ENCODE measurements at regions of chr2 and their contacts with region 1.

Region 1: DNA sequence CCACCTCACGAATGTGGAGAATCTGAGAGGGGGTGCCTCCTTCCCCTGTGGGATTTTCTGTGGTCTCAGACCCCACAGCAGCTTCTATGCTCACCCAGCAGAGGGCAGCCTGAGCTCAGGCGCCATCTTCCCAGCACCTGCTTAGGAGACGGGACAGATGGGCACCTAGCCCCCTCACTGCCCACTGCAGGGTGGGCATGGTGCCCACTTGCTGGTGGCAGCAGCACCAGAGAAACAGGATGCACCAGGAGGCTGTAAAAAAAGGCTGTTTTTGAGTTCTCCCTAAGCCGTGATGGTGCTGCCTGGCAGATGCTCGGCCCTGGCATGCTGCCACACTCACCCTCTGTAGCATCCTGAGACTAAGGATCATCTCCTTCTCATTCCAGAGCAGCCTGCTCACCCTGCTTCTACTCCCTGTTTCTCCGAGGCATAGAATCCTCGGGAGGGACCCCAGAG is 19.1 kb upstream of the SLC20A1 start:
- DNase-seq: peak in 1 of 2 donors; percentile 62
- H3K4me3 ChIP-seq: peak overlapping the region in 2 of 3 donors; percentile 25 to 51
- H3K27ac ChIP-seq: peak overlapping the region; percentile 75 to 93
- H3K4me1 ChIP-seq: peaks cover 0 to 14% of the 10 kb centered on the region in 2 donors
- H3K27me3 ChIP-seq: no peaks in the 10 kb centered on the region
- CTCF ChIP-seq: peak; percentile 57 to 84 (median 70)
- POLR2A ChIP-seq: no peak

Region 2: GRCh38 chr2:111642586-111643327 is 983.9 kb before region 1 on chr2:
- intact Hi-C with region 1: no loop called
- DNase-seq: no peak
- H3K4me3 ChIP-seq: no peak overlapping the region
- H3K27ac ChIP-seq: no peak overlapping the region
- H3K4me1 ChIP-seq: no peaks in the 10 kb centered on the region
- H3K27me3 ChIP-seq: no peaks in the 10 kb centered on the region
- CTCF ChIP-seq: no peak
- POLR2A ChIP-seq: no peak

Region 3: GRCh38 chr2:112529757-112530156 is 96.9 kb before region 1 on chr2:
- intact Hi-C with region 1: no loop called
- DNase-seq: no peak
- H3K4me3 ChIP-seq: no peak overlapping the region
- H3K27ac ChIP-seq: no peak overlapping the region
- H3K4me1 ChIP-seq: no peaks in the 10 kb centered on the region
- H3K27me3 ChIP-seq: no peaks in the 10 kb centered on the region
- CTCF ChIP-seq: no peak
- POLR2A ChIP-seq: no peak

Region 4: DNA sequence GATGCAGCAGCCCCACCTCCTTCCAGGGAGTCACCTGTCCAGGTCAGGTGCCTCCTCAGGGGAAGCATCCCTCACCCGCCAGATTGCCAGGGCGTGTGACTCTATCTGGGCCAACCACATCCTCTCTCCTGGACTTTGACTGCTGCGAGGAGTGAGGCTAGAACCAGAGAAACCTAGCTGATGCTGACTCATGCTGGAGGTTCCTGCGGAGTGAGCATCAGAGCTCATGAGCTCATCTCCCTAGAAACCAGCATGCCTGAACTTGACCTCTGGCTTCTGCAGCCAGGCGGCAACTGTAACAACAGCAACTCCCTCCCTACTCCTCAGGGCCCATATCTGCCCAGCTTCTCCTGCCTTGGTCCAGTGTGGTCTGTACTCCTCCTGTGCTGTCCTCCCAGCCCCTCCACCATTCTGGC is 65.9 kb after region 1 on chr2:
- intact Hi-C with region 1: loop called (anchors 5 kb)
- DNase-seq: peak in 1 of 2 donors; percentile 62
- H3K4me3 ChIP-seq: no peak overlapping the region
- H3K27ac ChIP-seq: peak overlapping the region; percentile 5 to 80
- H3K4me1 ChIP-seq: no peaks in the 10 kb centered on the region
- H3K27me3 ChIP-seq: no peaks in the 10 kb centered on the region
- CTCF ChIP-seq: no peak
- POLR2A ChIP-seq: no peak

Region 5: GRCh38 chr2:112958428-112959108 is 331.9 kb after region 1 on chr2:
- intact Hi-C with region 1: loop called (anchors 10 kb)
- DNase-seq: no peak
- H3K4me3 ChIP-seq: no peak overlapping the region
- H3K27ac ChIP-seq: no peak overlapping the region
- H3K4me1 ChIP-seq: no peaks in the 10 kb centered on the region
- H3K27me3 ChIP-seq: no peaks in the 10 kb centered on the region
- CTCF ChIP-seq: peak in 2 of 3 donors; percentile 56 to 62
- POLR2A ChIP-seq: no peak